Activated CD8-positive, alpha-beta T cell treated with anti-CD3 and anti-CD28 coated beads, Interleukin-2, amount 10 ng/mL, durations not matched to agents 7 days and 5 days (primary cell): ENCODE measurements at regions of chr9 and their contacts with region 1.

Region 1: GRCh38 chr9:5582835-5583195 is 46.1 kb upstream of the RIC1 start:
- DNase-seq: peak; percentile 50
- ATAC-seq: peak; percentile 74
- H3K4me3 Mint-ChIP-seq: no peak overlapping the region
- H3K27ac Mint-ChIP-seq: no peak overlapping the region
- H3K4me1 Mint-ChIP-seq: peaks cover 40% of the 10 kb centered on the region
- H3K27me3 Mint-ChIP-seq: no peaks in the 10 kb centered on the region

Region 2: GRCh38 chr9:5186416-5187169 is 396.2 kb before region 1 on chr9:
- CTCF ChIA-PET with region 1: interaction called, 15 read pairs
- POLR2A ChIA-PET with region 1: no interaction called
- DNase-seq: peak; percentile 77
- ATAC-seq: peak; percentile 87
- H3K4me3 Mint-ChIP-seq: no peak overlapping the region
- H3K27ac Mint-ChIP-seq: no peak overlapping the region
- H3K4me1 Mint-ChIP-seq: peaks cover 12% of the 10 kb centered on the region
- H3K27me3 Mint-ChIP-seq: no peaks in the 10 kb centered on the region

Region 3: DNA sequence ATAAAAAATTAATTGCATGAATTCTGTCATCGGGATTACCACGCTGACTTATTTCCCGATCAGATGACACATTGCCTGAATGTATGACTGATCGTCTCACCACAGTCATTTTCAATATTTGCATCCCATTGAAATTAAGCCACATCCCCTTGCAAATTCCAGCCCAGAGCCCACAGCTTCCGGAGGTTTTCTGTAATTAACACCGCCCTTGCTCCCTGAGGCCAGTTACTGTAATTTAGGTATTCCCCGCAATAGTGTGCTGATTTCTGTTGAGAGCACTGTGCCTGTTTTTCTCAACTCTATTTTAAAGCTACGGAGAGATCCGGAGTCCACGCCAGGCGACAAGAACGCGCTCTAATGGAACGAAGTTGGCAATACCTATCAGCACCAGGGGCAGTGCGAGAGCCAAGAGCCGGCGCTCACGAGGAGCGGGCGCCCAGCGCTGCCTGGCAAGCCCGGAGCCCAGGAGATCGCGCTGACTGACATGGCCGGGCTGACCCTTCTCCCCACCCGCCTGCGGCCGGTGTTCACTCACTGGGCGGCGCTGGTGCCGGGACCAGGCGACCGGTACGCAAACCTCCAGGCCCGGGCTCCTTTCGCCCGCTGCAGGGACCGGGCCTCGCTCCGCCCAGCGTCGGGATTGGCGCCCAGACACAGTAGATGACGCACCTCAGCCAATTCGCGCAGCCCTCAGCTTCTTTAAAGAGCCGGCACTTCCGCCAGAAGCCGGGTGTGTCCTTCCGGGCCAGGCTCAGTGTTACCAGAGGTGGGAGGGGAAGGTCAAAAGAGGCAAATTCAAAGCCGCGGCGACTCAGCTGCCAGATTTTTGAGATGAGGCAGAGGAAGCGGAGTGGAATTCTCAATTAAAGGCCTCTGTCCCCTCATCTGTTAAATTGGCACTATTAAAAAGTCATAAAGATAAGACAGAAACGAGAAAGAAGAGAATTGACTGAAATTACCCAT is 145.3 kb before region 1 on chr9 and contains the start of gene PLGRKT:
- CTCF ChIA-PET with region 1: interaction called, 17 read pairs
- POLR2A ChIA-PET with region 1: interaction called, 4 read pairs
- DNase-seq: peak; percentile 95
- ATAC-seq: peak; percentile 99
- H3K4me3 Mint-ChIP-seq: peak within 1 kb of the TSS; percentile 96
- H3K27ac Mint-ChIP-seq: peak within 1 kb of the TSS; percentile 96
- H3K4me1 Mint-ChIP-seq: peaks cover 29% of the 10 kb centered on the region
- H3K27me3 Mint-ChIP-seq: no peaks in the 10 kb centered on the region
- total RNA-seq, gene PLGRKT: 30.5 to 30.7 TPM

Region 4: GRCh38 chr9:5549658-5550310 is 33.0 kb before region 1 on chr9:
- CTCF ChIA-PET with region 1: no interaction called
- POLR2A ChIA-PET with region 1: no interaction called
- DNase-seq: no peak
- ATAC-seq: no peak
- H3K4me3 Mint-ChIP-seq: no peak overlapping the region
- H3K27ac Mint-ChIP-seq: no peak overlapping the region
- H3K4me1 Mint-ChIP-seq: no peaks in the 10 kb centered on the region
- H3K27me3 Mint-ChIP-seq: no peaks in the 10 kb centered on the region

Region 5: GRCh38 chr9:5622019-5622418 is 39.2 kb after region 1 on chr9:
- CTCF ChIA-PET with region 1: interaction called, 12 read pairs
- POLR2A ChIA-PET with region 1: interaction called, 4 read pairs
- DNase-seq: no peak
- ATAC-seq: no peak
- H3K4me3 Mint-ChIP-seq: no peak overlapping the region
- H3K27ac Mint-ChIP-seq: no peak overlapping the region
- H3K4me1 Mint-ChIP-seq: peaks cover 40% of the 10 kb centered on the region
- H3K27me3 Mint-ChIP-seq: no peaks in the 10 kb centered on the region